Psoas muscle (tissue), 8 donors: ENCODE measurements at regions of chr17 and their contacts with region 1.

Region 1: DNA sequence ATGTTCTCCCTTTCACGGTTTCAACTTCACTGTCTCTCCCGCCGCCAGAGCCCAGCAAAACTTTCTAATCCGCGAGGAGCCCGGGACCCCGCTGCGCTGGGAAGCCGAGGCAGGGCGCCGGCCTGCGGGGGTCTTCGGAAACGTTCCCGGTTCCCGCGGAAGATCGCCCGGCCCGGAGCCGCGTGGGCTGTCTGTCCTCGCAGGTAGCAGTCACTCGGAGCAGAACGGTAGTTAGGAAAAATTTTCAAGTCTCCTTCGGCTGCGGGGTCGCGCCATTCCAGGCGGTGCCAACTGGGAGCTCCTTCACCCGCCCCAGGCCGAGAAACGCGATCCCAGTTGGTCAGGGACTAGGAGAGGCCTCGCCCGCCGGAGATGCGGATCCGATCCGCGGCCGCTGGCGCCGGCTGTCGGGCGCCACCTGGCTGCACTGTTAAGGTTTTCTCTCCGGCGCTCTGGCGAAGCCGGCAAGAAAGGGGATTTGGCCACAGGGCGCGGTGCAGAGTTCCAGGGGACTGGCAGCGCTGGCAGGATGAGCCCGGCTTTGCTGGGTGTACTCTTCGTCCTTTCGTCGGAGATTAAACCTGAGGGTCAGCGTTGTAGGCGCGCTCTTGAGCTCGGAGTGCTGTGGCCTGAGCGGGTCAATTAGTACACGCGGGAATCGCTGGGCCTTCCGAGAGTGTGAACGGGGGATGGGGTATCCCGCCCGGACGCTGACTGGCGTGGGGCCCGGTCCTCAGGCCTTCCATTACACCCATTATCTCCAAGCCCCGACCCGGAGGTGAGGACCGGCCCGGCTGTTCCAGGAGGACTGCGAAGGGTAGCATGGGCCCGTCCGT is 135.4 kb downstream of the KCNJ12 start:
- DNase-seq: peak; percentile 85 to 93
- ATAC-seq: peak; percentile 92 to 97 (median 94)
- H3K4me3 ChIP-seq: peak overlapping the region; percentile 81
- H3K27ac ChIP-seq: peak overlapping the region; percentile 66
- H3K4me1 ChIP-seq: peaks cover 3% of the 10 kb centered on the region
- H3K27me3 ChIP-seq: no peaks in the 10 kb centered on the region
- CTCF ChIP-seq: peak; percentile 84

Region 2: GRCh38 chr17:21119247-21119918 is 392.2 kb before region 1 on chr17:
- intact Hi-C with region 1: loop called in 1 of 2 experiments (anchors 10 kb)
- DNase-seq: peak; percentile 65 to 74
- ATAC-seq: peak; percentile 65 to 88 (median 72)
- H3K4me3 ChIP-seq: no peak overlapping the region
- H3K27ac ChIP-seq: no peak overlapping the region
- H3K4me1 ChIP-seq: no peaks in the 10 kb centered on the region
- H3K27me3 ChIP-seq: no peaks in the 10 kb centered on the region
- CTCF ChIP-seq: peak; percentile 84

Region 3: GRCh38 chr17:21275579-21276263 is 235.9 kb before region 1 on chr17:
- intact Hi-C with region 1: loop called (anchors 2 to 10 kb)
- DNase-seq: peak; percentile 94 to 97
- ATAC-seq: peak; percentile 89 to 94 (median 92)
- H3K4me3 ChIP-seq: peak overlapping the region; percentile 74
- H3K27ac ChIP-seq: peak overlapping the region; percentile 81
- H3K4me1 ChIP-seq: peaks cover 45% of the 10 kb centered on the region
- H3K27me3 ChIP-seq: no peaks in the 10 kb centered on the region
- CTCF ChIP-seq: no peak

Region 4: DNA sequence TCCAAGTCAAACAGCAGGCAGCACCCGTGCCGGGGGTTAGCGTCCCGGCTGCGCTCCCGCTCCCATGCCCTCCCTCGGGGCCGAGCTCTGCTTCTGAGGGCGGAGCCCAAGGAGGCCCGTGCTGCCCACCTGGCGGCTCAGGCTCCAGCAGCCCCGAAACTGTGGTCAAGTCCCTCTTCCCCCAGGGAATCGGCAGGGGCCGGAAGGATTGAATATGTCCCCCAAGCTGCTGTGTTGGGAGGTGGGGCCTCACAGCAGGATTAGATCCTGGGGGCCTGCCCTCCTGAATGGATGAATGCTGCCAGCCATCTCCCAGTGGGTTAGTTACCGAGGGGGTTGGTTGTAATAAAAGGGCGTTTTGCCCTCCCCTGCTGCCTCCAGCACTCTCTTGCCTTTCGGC is 193.1 kb before region 1 on chr17:
- intact Hi-C with region 1: loop called (anchors 5 to 10 kb)
- DNase-seq: peak; percentile 11 to 50
- ATAC-seq: no peak
- H3K4me3 ChIP-seq: no peak overlapping the region
- H3K27ac ChIP-seq: no peak overlapping the region
- H3K4me1 ChIP-seq: no peaks in the 10 kb centered on the region
- H3K27me3 ChIP-seq: no peaks in the 10 kb centered on the region
- CTCF ChIP-seq: no peak

Region 5: DNA sequence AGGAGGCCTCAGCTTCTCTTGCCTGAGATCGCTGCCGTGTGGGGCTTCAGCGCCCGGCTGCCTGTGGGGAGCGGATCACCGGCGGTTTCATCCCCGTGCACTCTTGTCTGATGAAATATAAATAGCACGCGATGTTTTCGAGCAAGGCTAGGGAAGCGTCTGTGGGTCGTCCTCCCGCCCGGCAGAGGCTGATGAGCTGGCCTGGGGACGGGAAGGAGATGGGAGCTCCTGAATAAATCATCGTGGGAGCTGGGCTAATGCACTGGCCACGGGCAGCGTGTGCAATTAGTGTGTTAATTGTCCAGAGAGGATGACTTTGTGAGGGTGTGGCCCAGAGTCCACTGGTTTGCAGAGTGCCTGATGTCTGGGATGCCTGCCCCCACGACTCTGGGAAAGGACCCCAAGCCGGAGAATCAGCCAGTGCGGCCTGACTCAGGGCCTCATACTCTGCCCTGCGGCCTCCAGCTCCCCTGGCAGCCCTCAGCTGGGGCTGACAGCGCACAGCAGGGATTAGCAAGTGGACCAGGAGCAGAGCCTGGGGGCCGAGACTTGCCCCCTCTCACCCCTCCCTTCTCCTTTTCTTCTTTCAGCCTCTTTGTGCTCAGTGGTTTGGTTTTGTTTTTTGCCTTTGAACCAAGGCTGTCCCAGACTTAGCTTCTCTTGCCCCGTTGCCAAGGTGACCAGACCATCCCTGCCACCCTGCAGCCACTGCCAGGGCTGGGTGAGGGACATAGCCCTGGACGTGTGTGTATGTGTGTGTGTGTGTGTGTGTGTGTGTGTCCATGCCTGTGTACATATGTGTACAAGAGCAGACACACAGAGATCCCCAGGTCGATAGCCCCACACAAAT is 114.0 kb before region 1 on chr17:
- intact Hi-C with region 1: no loop called
- DNase-seq: peak in 1 of 2 donors; percentile 43
- ATAC-seq: peak in 3 of 4 donors; percentile 21 to 54 (median 34)
- H3K4me3 ChIP-seq: no peak overlapping the region
- H3K27ac ChIP-seq: peak overlapping the region; percentile 41
- H3K4me1 ChIP-seq: peaks cover 11% of the 10 kb centered on the region
- H3K27me3 ChIP-seq: no peaks in the 10 kb centered on the region
- CTCF ChIP-seq: no peak

Region 6: GRCh38 chr17:21445091-21445650 is 66.4 kb before region 1 on chr17:
- intact Hi-C with region 1: no loop called
- DNase-seq: no peak
- ATAC-seq: no peak
- H3K4me3 ChIP-seq: no peak overlapping the region
- H3K27ac ChIP-seq: no peak overlapping the region
- H3K4me1 ChIP-seq: no peaks in the 10 kb centered on the region
- H3K27me3 ChIP-seq: no peaks in the 10 kb centered on the region
- CTCF ChIP-seq: no peak

Region 7: GRCh38 chr17:21457051-21458026 is 54.2 kb before region 1 on chr17:
- intact Hi-C with region 1: loop called (anchors 1 to 2 kb)
- DNase-seq: peak; percentile 91 to 96
- ATAC-seq: peak; percentile 90 to 97 (median 92)
- H3K4me3 ChIP-seq: no peak overlapping the region
- H3K27ac ChIP-seq: peak overlapping the region; percentile 66
- H3K4me1 ChIP-seq: peaks cover 4% of the 10 kb centered on the region
- H3K27me3 ChIP-seq: no peaks in the 10 kb centered on the region
- CTCF ChIP-seq: peak; percentile 94